ENCODE measurements at regions of chr16 and their contacts with region 1.

Region 1: DNA sequence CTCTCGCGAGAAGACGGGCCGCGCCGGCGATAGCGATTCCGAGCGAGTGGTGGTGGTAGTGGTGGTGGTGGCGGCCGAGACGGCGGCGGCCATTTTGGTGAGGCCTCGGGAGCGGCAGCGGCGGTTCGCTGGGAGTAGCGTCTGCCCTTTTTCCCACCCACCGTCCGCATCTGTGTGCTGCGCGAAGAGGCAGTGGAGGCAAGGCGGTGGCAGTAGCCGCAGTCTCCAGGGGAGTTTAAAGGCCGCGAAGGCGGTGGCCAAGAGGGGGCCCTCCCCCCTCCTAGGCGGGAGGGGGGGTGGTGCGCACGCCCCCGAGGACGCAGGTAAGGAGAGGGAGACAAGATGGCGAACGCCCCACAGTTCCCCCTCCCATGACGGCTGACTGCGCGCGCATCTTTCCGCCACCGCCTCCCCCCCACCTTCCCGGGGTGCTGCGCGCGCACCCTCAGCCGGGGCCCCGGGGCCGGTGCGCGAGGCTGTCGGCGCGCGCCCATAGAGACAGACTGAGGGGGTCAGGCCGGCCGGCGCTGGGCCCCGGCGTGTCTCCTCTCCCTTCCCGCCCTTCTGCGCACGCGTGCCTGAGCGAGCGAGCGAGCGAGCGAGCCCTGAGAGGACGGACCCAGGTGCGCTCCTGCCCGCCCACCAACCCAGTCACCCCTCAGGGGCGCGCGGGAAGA is 694 bp upstream of the SRCAP start:
- DNase-seq: peak; percentile 73 to 97
- H3K4me3 ChIP-seq: peak overlapping the region; percentile 72 to 97 (median 86)
- H3K27ac ChIP-seq: peak overlapping the region; percentile 100
- H3K4me1 ChIP-seq: peaks cover 0 to 4% (median 3%) of the 10 kb centered on the region in 4 experiments; a peak in 5 of 7 replicates
- H3K27me3 ChIP-seq: peaks cover 13 to 37% (median 26%) of the 10 kb centered on the region in 4 experiments
- CTCF ChIP-seq: no peak
- EP300 ChIP-seq: no peak
- POLR2A ChIP-seq: peak; percentile 96 to 97
- RAD21 ChIP-seq: no peak

Region 2: DNA sequence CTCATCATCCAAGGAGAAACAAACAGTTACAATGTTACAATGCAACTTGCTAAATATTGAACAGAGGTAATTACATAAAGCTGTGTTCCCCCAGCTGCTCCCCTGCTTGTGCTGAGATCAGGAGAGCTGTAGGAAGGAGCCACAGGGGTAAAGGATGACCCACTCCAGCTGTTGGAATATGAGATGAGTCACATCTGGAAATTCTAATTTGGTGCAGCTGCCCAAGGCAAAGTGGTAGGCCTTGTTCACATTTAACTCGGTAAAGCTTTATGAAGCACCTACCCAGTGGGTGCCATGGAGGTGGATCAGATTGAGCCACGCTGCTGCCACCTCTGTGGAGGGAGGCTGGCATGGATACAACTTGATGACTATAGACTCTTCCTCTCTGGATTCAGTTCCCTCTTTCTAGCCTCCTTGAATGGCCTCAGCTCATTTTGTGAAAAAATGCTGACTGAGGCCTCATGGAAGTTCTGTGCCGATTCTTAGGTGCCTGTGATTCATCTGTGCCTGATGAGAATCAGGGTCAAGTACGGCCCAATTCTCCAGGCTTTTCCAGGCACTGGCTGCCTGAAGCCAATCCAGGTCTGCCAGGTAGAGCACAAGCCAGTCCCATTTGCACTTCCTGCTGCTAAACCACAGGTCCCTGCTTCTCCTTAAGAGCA is 95.5 kb before region 1 on chr16:
- CTCF ChIA-PET with region 1: no interaction called
- POLR2A ChIA-PET with region 1: no interaction called
- DNase-seq: no peak
- H3K4me3 ChIP-seq: no peak overlapping the region
- H3K27ac ChIP-seq: no peak overlapping the region
- H3K4me1 ChIP-seq: no peaks in the 10 kb centered on the region
- H3K27me3 ChIP-seq: no peaks in the 10 kb centered on the region
- CTCF ChIP-seq: no peak
- EP300 ChIP-seq: no peak
- POLR2A ChIP-seq: no peak
- RAD21 ChIP-seq: no peak

Region 3: GRCh38 chr16:30650369-30651123 is 47.7 kb before region 1 on chr16 and contains the start of gene PRR14:
- CTCF ChIA-PET with region 1: interaction called, 48 read pairs
- POLR2A ChIA-PET with region 1: no interaction called
- DNase-seq: peak; percentile 96 to 99
- H3K4me3 ChIP-seq: peak within 1 kb of the TSS; percentile 63 to 78 (median 70)
- H3K27ac ChIP-seq: peak within 1 kb of the TSS; percentile 58; the same call in 1 of the 2 replicates
- H3K4me1 ChIP-seq: peaks cover 0 to 7% (median 0%) of the 10 kb centered on the region in 4 experiments; a peak in 3 of 7 replicates
- H3K27me3 ChIP-seq: peaks cover 0 to 13% (median 11%) of the 10 kb centered on the region in 4 experiments; a peak in 6 of 7 replicates
- CTCF ChIP-seq: no peak
- EP300 ChIP-seq: no peak
- POLR2A ChIP-seq: no peak; a peak in 1 of 3 replicates
- RAD21 ChIP-seq: no peak
- total RNA-seq, gene PRR14: 16.1 and 18.9 TPM in 2 replicates

Region 4: GRCh38 chr16:30657866-30658730 is 40.2 kb before region 1 on chr16 and contains the start of gene FBRS:
- CTCF ChIA-PET with region 1: interaction called, 48 read pairs
- POLR2A ChIA-PET with region 1: interaction called, 14 read pairs
- DNase-seq: peak; percentile 98 to 100
- H3K4me3 ChIP-seq: peak within 1 kb of the TSS; percentile 61 to 96 (median 78)
- H3K27ac ChIP-seq: peak within 1 kb of the TSS; percentile 91
- H3K4me1 ChIP-seq: peaks cover 2 to 13% (median 6%) of the 10 kb centered on the region in 4 experiments; a peak in 6 of 7 replicates
- H3K27me3 ChIP-seq: peaks cover 2 to 35% (median 22%) of the 10 kb centered on the region in 4 experiments
- CTCF ChIP-seq: peak; percentile 74 to 79 (median 77)
- EP300 ChIP-seq: peak in 1 of 2 experiments; percentile 69; a peak in 1 of 3 replicates
- POLR2A ChIP-seq: 0 out of 3 replicates have a peak, but pooled peaks of 1 of the 2 experiments have one; percentile 43
- RAD21 ChIP-seq: peak; percentile 46 to 61
- total RNA-seq, gene FBRS: 12.9 and 13.9 TPM in 2 replicates

Region 5: DNA sequence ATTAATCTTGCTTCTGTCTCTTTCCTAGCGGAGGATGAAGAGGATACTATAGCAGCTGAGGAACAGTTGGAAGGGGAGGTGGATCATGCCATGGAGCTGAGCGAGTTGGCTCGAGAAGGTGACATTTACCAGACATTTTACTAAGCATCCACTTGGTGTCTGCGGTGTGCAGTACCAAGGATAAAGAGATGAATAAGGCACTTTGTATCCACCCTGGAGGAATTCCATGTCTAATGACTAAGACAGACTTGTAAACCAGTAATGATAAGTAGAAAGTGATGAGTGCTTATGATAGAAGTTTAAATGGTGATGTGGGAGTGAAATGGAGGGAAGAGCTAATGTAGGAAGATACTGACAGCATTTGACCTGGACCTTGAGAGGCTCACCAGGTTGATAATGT is 12.7 kb after region 1 on chr16:
- CTCF ChIA-PET with region 1: interaction called, 3 read pairs
- POLR2A ChIA-PET with region 1: interaction called, 26 read pairs
- DNase-seq: no peak
- H3K4me3 ChIP-seq: no peak overlapping the region
- H3K27ac ChIP-seq: no peak overlapping the region
- H3K4me1 ChIP-seq: no peaks in the 10 kb centered on the region
- H3K27me3 ChIP-seq: no peaks in the 10 kb centered on the region
- CTCF ChIP-seq: no peak
- EP300 ChIP-seq: no peak
- POLR2A ChIP-seq: no peak
- RAD21 ChIP-seq: no peak

Region 6: DNA sequence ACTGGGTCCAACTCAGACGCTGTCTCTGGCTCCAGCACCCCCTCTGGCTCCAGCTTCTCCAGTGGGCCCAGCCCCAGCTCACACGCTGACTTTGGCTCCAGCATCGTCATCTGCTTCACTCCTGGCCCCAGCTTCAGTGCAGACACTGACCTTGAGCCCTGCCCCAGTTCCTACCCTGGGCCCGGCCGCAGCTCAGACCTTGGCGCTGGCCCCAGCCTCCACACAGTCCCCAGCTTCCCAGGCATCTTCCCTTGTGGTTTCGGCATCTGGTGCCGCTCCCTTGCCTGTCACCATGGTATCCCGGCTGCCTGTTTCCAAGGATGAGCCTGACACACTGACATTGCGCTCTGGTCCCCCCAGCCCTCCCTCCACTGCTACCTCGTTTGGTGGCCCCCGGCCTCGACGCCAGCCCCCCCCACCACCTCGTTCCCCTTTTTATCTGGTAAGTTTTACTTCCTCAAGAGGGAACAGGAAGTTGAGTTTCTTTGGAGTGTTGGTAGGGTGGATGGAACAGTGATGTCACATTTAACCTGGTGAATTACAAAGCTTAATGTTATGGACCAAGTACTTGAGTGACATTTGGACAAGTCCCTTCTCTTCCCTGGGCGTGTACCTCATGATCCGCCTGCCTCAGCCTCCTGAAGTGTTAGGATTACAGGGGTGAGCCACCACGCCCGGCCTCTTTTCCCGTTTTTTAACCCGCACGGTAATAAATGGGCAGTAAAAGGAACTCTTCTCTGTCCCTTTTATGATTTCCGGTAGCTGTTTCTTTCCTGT is 26.6 kb after region 1 on chr16:
- CTCF ChIA-PET with region 1: interaction called, 3 read pairs
- POLR2A ChIA-PET with region 1: interaction called, 25 read pairs
- DNase-seq: no peak
- H3K4me3 ChIP-seq: no peak overlapping the region
- H3K27ac ChIP-seq: no peak overlapping the region
- H3K4me1 ChIP-seq: peaks cover 0 to 3% (median 3%) of the 10 kb centered on the region in 4 experiments; a peak in 2 of 7 replicates
- H3K27me3 ChIP-seq: no peaks in the 10 kb centered on the region
- CTCF ChIP-seq: no peak
- EP300 ChIP-seq: no peak
- POLR2A ChIP-seq: no peak
- RAD21 ChIP-seq: no peak

Region 7: DNA sequence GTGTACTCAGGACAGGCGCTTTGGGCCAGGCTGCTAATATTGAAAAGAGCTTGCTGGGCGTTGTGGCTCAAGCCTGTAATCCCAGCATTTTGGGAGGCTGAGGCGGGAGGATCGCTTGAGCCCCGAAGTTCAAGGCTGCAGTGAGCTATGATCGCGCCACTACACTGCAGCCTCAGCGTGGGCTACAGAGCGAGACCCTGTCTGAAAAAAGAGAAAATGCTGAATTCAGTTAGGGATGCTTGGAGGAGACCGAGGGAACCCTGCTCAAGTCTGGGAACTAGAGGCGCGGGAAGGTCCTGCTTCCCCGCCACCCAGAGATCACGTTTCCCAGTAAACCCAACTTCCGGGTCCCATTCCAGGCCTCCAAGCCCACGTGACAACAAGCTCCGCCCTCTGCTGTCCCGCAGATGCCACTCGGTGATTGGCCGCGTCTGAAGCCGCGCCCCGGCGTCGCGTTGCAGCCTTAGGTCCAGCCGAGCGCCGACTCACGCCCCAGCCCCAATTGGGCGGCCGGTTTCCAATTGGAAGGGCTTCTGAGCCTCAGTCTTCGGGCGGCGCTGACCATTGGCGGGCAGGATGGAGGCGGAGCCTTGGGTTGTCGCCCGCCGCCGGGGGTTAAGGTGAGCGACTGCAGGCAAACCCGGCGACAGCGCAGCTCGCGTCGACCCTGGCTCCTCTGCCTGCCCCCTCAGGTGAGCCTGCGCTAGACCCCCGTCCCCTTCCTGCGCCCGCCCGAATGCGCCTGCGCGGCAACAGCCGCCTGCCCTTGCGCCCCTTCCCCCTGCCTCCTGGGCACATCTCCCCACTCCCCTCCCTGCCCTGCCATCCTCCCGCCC is 49.7 kb after region 1 on chr16 and contains the start of gene PHKG2:
- CTCF ChIA-PET with region 1: no interaction called
- POLR2A ChIA-PET with region 1: interaction called, 21 read pairs
- DNase-seq: peak; percentile 96 to 97
- H3K4me3 ChIP-seq: peak within 1 kb of the TSS; percentile 54 to 81 (median 65)
- H3K27ac ChIP-seq: peak within 1 kb of the TSS; percentile 78
- H3K4me1 ChIP-seq: peaks cover 0 to 4% (median 0%) of the 10 kb centered on the region in 4 experiments; a peak in 2 of 7 replicates
- H3K27me3 ChIP-seq: no peaks in the 10 kb centered on the region
- CTCF ChIP-seq: no peak
- EP300 ChIP-seq: 0 out of 3 replicates have a peak, but pooled peaks of 1 of the 2 experiments have one; percentile 15
- POLR2A ChIP-seq: peak; percentile 78 to 92
- RAD21 ChIP-seq: no peak
- total RNA-seq, gene PHKG2: 36.0 and 37.2 TPM in 2 replicates